Esophagus muscularis mucosa (tissue), 4 donors: ENCODE measurements at regions of chr10 and their contacts with region 1.

Region 1: DNA sequence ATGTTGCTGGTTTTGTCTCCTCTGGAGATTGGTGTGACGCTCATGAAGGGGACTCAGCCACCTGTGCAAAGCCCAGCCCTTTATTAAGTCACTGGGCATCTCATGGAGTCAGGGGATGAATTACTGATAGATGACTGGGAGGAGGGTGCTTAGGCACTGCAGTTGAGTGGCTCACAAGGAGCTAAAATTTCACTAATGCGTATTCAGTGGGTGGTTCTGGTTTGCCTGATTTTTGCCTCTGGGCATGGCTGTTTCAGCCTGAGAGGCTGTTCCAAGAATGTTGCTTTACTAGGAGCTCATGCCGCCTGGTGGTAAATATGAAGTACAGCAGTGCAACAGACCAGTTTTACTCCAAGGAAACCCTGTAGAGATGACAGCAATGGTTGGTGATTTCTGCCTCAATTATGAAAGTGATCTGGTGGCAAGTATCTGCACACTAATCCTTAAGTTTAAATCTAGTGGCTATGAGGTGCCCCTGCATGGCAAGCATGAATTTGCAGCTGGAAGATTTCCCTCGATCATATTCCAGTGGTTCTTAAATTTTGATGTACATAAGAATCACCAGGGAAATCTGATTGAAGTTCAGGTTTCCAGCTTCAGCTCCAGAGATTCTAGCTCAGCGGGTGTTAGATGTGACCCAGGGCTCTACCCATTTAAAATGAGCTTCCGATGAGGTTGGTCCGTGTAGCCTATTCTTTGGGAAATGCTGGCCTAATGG is 19.9 kb downstream of the ACTA2 start:
- DNase-seq: no peak
- H3K4me3 ChIP-seq: no peak overlapping the region
- H3K27ac ChIP-seq: peak overlapping the region; percentile 69 to 81 (median 75)
- H3K4me1 ChIP-seq: peaks cover 18 to 49% (median 45%) of the 10 kb centered on the region in 4 donors
- H3K27me3 ChIP-seq: no peaks in the 10 kb centered on the region
- CTCF ChIP-seq: peak; percentile 90 to 94 (median 91)
- EP300 ChIP-seq: no peak
- POLR2A ChIP-seq: no peak

Region 2: GRCh38 chr10:88835096-88835909 is 97.4 kb before region 1 on chr10:
- intact Hi-C with region 1: loop called (anchors 2 kb)
- DNase-seq: no peak
- H3K4me3 ChIP-seq: no peak overlapping the region
- H3K27ac ChIP-seq: no peak overlapping the region
- H3K4me1 ChIP-seq: peaks cover 0 to 9% (median 3%) of the 10 kb centered on the region in 4 donors
- H3K27me3 ChIP-seq: no peaks in the 10 kb centered on the region
- CTCF ChIP-seq: peak; percentile 84 to 89 (median 85)
- EP300 ChIP-seq: no peak
- POLR2A ChIP-seq: no peak

Region 3: GRCh38 chr10:88880282-88881076 is 52.2 kb before region 1 on chr10:
- intact Hi-C with region 1: loop called (anchors 5 kb)
- DNase-seq: peak; percentile 95
- H3K4me3 ChIP-seq: peak overlapping the region; percentile 71 to 84 (median 76)
- H3K27ac ChIP-seq: peak overlapping the region; percentile 85 to 89 (median 88)
- H3K4me1 ChIP-seq: peaks cover 7 to 51% (median 46%) of the 10 kb centered on the region in 4 donors
- H3K27me3 ChIP-seq: no peaks in the 10 kb centered on the region
- CTCF ChIP-seq: peak in 2 of 3 experiments; percentile 9 to 24
- EP300 ChIP-seq: no peak
- POLR2A ChIP-seq: peak; percentile 36

Region 4: GRCh38 chr10:88990384-88991160 is 57.9 kb after region 1 on chr10 and contains the start of gene FAS:
- intact Hi-C with region 1: loop called (anchors 2 kb)
- DNase-seq: peak; percentile 94
- H3K4me3 ChIP-seq: peak within 1 kb of the TSS; percentile 87 to 99 (median 90)
- H3K27ac ChIP-seq: peak within 1 kb of the TSS; percentile 93 to 98 (median 97)
- H3K4me1 ChIP-seq: peaks cover 8 to 77% (median 72%) of the 10 kb centered on the region in 4 donors
- H3K27me3 ChIP-seq: no peaks in the 10 kb centered on the region
- CTCF ChIP-seq: no peak
- EP300 ChIP-seq: no peak
- POLR2A ChIP-seq: peak; percentile 23
- total RNA-seq, gene FAS: 16.6 to 27.5 (median 18.7) TPM

Region 5: DNA sequence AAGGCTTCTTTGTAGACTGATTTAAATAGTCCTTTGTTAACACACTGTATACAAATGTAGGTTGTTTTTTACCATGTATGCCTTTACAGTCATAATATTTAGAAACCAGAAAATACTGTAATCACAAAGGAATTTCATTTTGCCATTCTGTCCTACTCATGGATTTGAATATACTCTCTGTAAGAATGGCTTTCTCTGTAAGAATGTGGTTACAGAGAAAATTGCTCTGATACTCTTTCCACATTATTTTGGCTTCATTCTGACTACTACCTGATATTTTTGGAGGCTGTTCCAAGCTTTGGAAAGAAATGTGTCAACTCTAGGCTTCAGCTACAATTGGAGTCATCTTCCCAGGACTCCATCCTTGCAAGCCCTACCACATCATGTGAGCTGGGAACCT is 250.9 kb after region 1 on chr10:
- intact Hi-C with region 1: no loop called
- DNase-seq: no peak
- H3K4me3 ChIP-seq: no peak overlapping the region
- H3K27ac ChIP-seq: no peak overlapping the region
- H3K4me1 ChIP-seq: peaks cover 0 to 12% (median 10%) of the 10 kb centered on the region in 4 donors
- H3K27me3 ChIP-seq: no peaks in the 10 kb centered on the region
- CTCF ChIP-seq: no peak
- EP300 ChIP-seq: no peak
- POLR2A ChIP-seq: no peak

Region 6: GRCh38 chr10:89213191-89213808 is 280.6 kb after region 1 on chr10:
- intact Hi-C with region 1: loop called (anchors 5 kb)
- DNase-seq: no peak
- H3K4me3 ChIP-seq: no peak overlapping the region
- H3K27ac ChIP-seq: no peak overlapping the region
- H3K4me1 ChIP-seq: peaks cover 4 to 24% (median 12%) of the 10 kb centered on the region in 4 donors
- H3K27me3 ChIP-seq: peaks cover 0 to 5% (median 0%) of the 10 kb centered on the region in 4 donors
- CTCF ChIP-seq: peak; percentile 58 to 76 (median 63)
- EP300 ChIP-seq: no peak
- POLR2A ChIP-seq: no peak